Breast epithelium (tissue), 4 donors: ENCODE measurements at regions of chr21 and their contacts with region 1.

Region 1: GRCh38 chr21:26224351-26224750 is 53.8 kb upstream of the APP start:
- DNase-seq: no peak
- H3K4me3 ChIP-seq: no peak overlapping the region
- H3K27ac ChIP-seq: no peak overlapping the region
- H3K4me1 ChIP-seq: no peaks in the 10 kb centered on the region
- H3K27me3 ChIP-seq: no peaks in the 10 kb centered on the region
- CTCF ChIP-seq: no peak
- POLR2A ChIP-seq: no peak

Region 2: GRCh38 chr21:26617176-26617575 is 392.8 kb after region 1 on chr21:
- intact Hi-C with region 1: loop called (anchors 5 kb)
- DNase-seq: no peak
- H3K4me3 ChIP-seq: no peak overlapping the region
- H3K27ac ChIP-seq: no peak overlapping the region
- H3K4me1 ChIP-seq: no peaks in the 10 kb centered on the region
- H3K27me3 ChIP-seq: no peaks in the 10 kb centered on the region
- CTCF ChIP-seq: no peak
- POLR2A ChIP-seq: no peak